ENCODE measurements at regions of chr11 and their contacts with region 1.

Region 1: DNA sequence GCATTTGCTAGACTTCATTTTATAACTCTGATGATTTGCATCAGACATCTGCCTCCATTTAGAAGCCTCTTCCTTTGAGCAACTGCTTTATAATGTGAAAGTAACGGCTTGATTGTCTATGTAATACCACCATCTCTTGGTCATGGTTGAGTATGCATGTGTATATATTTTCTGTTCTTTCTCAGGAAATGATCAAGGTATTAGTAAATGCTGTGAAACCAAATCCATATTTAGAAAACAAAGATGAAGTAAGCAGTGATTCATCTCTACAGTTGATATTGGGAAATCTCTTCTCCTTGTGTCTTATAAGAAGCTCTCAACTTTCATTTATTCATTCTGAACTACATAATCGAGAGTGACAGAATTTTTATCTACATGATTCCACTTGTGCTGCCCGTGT is 104.6 kb upstream of the ANO3 start:
- DNase-seq: peak; percentile 92
- H3K4me3 ChIP-seq: no peak overlapping the region
- H3K27ac ChIP-seq: peak overlapping the region; percentile 87
- H3K4me1 ChIP-seq: peaks cover 49% of the 10 kb centered on the region
- H3K27me3 ChIP-seq: no peaks in the 10 kb centered on the region
- CTCF ChIP-seq: peak; percentile 34 to 43
- POLR2A ChIP-seq: no peak

Region 2: GRCh38 chr11:24509114-24509513 is 1718.2 kb before region 1 on chr11:
- CTCF ChIA-PET with region 1: no interaction called
- POLR2A ChIA-PET with region 1: no interaction called
- dilution Hi-C with region 1: no loop called
- intact Hi-C with region 1: loop called (anchors 5 kb)
- DNase-seq: peak; percentile 15
- H3K4me3 ChIP-seq: no peak overlapping the region
- H3K27ac ChIP-seq: no peak overlapping the region
- H3K4me1 ChIP-seq: no peaks in the 10 kb centered on the region
- H3K27me3 ChIP-seq: peaks cover 0 to 2% of the 10 kb centered on the region in 2 experiments
- CTCF ChIP-seq: peak in 1 of 2 donors; percentile 6
- POLR2A ChIP-seq: no peak

Region 3: DNA sequence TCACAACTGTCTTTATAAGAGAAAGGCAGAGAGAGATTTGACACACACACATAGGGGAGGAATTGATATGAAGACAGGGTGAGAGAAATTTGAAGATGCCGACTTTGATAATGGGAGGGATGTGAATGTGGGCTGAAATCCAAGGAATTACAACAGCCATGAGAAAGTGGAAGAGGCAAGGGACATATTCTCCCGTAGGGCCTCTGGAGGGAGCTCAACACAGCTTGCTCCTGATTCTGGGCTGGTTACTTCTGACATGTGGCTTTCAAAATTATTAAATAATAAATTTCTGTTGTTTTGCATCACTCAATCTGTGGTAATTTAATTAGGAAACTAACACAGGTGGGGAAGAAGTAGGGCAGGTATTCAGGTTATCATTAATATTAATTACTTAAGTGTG is 1447.5 kb before region 1 on chr11:
- CTCF ChIA-PET with region 1: no interaction called
- POLR2A ChIA-PET with region 1: no interaction called
- dilution Hi-C with region 1: no loop called
- intact Hi-C with region 1: loop called (anchors 1 kb)
- DNase-seq: peak; percentile 14
- H3K4me3 ChIP-seq: no peak overlapping the region
- H3K27ac ChIP-seq: no peak overlapping the region
- H3K4me1 ChIP-seq: no peaks in the 10 kb centered on the region
- H3K27me3 ChIP-seq: no peaks in the 10 kb centered on the region
- CTCF ChIP-seq: peak in 1 of 2 donors; percentile 37
- POLR2A ChIP-seq: no peak

Region 4: DNA sequence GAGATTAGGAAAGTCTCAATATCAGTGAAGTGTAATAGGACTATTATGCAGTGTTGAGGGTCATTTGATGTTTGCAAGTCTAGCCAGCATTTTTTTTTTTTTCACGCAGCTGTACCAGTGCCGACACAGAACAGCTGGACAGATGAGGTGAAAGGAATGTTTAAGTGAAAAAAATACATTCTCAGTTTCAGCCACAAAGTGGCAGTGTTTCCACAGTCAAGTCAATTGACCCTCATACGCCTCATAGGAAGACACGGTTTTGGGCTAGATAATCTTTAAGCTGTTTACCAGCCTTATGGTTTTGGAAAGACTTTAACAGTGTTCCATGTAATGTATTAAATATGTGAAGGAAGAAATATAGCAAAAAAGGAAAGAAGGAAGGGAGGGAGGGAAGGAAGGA is 245.3 kb before region 1 on chr11:
- CTCF ChIA-PET with region 1: interaction called, 142 read pairs
- POLR2A ChIA-PET with region 1: no interaction called
- dilution Hi-C with region 1: loop called (anchors 25 kb)
- intact Hi-C with region 1: loop called (anchors 1 kb)
- DNase-seq: peak; percentile 72
- H3K4me3 ChIP-seq: no peak overlapping the region
- H3K27ac ChIP-seq: no peak overlapping the region
- H3K4me1 ChIP-seq: no peaks in the 10 kb centered on the region
- H3K27me3 ChIP-seq: no peaks in the 10 kb centered on the region
- CTCF ChIP-seq: peak; percentile 32 to 38
- POLR2A ChIP-seq: no peak

Region 5: DNA sequence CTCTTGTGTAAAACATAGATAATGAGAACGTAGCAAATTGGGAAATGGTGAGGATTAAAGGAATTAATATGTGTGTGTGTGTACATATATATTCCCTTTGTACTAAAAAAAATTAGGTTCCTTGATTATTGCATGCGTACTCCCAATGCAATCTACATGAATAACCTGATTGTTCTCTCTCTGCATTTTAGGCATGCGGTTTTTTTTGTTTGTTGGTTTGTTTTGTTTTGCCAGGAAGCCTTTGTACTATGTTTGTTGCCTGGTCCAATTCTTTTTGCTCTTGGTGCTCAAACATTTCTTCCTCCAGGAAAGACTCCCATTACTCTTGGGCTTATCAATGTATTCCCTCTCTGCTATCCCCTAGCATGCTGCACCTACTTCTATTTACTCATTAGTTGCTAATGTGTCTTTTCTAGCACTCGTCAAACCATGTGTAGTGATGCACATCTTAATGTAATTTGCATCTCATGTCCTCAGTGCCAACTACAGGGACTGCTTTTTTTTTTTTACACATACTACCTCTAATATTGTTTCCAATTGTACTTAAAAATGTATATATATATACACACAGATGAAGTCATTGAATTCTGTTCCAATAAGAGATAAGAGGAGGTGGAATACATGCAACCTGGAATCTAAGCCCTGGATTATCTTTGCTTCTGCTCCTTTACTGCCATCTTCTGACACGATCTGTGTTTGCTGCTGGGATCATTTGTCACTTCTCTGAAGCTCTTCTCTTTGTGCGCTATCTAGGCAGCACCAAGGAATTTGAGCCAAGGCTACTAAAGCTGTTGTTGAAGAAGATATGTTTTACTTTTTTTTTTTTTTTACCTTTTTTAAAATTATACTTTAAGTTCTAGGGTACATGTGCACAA is 92.6 kb before region 1 on chr11:
- CTCF ChIA-PET with region 1: no interaction called
- POLR2A ChIA-PET with region 1: no interaction called
- dilution Hi-C with region 1: no loop called
- intact Hi-C with region 1: loop called (anchors 1 kb)
- DNase-seq: peak; percentile 7
- H3K4me3 ChIP-seq: no peak overlapping the region
- H3K27ac ChIP-seq: no peak overlapping the region
- H3K4me1 ChIP-seq: no peaks in the 10 kb centered on the region
- H3K27me3 ChIP-seq: no peaks in the 10 kb centered on the region
- CTCF ChIP-seq: no peak
- POLR2A ChIP-seq: no peak

Region 6: DNA sequence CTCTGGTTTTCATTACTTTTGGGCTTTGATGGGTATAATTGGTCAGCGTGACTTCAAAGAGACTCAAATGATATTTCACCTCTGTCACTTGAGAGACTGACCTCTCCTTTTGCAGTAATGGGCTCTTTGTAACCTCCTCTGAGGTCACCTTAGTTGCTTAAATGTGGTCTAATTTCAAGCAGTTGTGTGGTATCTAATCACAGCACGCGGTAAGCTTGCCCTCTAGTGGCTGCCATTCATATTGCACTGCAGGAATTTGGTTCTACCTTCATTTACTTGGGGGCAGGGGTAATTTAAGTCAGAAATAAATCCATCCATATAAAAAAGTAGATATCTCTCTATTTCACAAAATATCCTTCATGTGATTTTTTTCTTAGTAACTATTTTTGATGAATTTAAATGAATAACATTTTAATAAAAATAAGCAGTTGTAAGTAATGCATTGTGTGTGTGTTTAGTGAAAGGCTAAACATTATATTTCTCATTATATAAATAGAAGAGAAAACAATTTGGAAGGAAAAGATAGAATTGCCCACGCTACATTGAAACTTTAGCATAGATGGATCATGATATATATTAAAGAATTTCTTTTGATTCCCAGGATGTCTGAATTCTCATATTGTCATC is 49.6 kb after region 1 on chr11:
- CTCF ChIA-PET with region 1: interaction called, 20 read pairs
- POLR2A ChIA-PET with region 1: no interaction called
- dilution Hi-C with region 1: no loop called
- intact Hi-C with region 1: loop called (anchors 1 kb)
- DNase-seq: peak; percentile 87
- H3K4me3 ChIP-seq: no peak overlapping the region
- H3K27ac ChIP-seq: no peak overlapping the region
- H3K4me1 ChIP-seq: peaks cover 3% of the 10 kb centered on the region
- H3K27me3 ChIP-seq: no peaks in the 10 kb centered on the region
- CTCF ChIP-seq: peak; percentile 82 to 89
- POLR2A ChIP-seq: no peak

Region 7: GRCh38 chr11:26632691-26633159 is 405.4 kb after region 1 on chr11:
- CTCF ChIA-PET with region 1: no interaction called
- POLR2A ChIA-PET with region 1: no interaction called
- dilution Hi-C with region 1: no loop called
- intact Hi-C with region 1: no loop called
- DNase-seq: no peak
- H3K4me3 ChIP-seq: no peak overlapping the region
- H3K27ac ChIP-seq: no peak overlapping the region
- H3K4me1 ChIP-seq: no peaks in the 10 kb centered on the region
- H3K27me3 ChIP-seq: no peaks in the 10 kb centered on the region
- CTCF ChIP-seq: no peak
- POLR2A ChIP-seq: no peak

Measured in endothelial cell of umbilical vein (primary cell).